Lower leg skin (tissue), 4 donors: ENCODE measurements at regions of chr16 and their contacts with region 1.

Region 1: DNA sequence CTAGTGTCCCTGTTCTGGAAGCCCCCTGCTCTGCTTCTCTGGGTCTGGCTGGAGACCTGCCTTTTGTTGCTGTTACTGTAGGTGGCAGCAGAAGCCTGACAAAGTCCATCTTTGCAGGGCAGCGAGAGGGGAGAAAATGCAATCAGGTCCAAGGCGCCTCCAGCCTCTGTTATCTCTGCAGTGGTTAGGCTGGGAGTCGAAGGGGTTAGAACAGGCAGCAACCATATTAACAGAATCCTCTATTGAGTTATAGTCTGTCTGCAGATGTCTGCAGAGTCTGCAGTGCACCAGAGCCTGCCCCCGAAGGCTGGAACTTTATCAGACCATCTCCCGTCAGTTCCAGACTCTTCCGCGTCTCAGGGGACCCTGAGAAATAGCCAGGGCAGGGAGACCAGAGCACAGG is 404.9 kb upstream of the EEF2KMT start:
- DNase-seq: no peak
- H3K4me3 ChIP-seq: no peak overlapping the region
- CTCF ChIP-seq: no peak
- POLR2A ChIP-seq: no peak

Region 2: GRCh38 chr16:4371357-4372000 is 1131.0 kb before region 1 on chr16 and contains the start of gene VASN:
- intact Hi-C with region 1: loop called (anchors 10 kb)
- DNase-seq: peak; percentile 67 to 96
- H3K4me3 ChIP-seq: peak within 1 kb of the TSS; percentile 35
- CTCF ChIP-seq: no peak
- POLR2A ChIP-seq: peak in 1 of 2 donors; percentile 96
- total RNA-seq, gene VASN: 35.6 to 52.8 (median 46.7) TPM

Region 3: DNA sequence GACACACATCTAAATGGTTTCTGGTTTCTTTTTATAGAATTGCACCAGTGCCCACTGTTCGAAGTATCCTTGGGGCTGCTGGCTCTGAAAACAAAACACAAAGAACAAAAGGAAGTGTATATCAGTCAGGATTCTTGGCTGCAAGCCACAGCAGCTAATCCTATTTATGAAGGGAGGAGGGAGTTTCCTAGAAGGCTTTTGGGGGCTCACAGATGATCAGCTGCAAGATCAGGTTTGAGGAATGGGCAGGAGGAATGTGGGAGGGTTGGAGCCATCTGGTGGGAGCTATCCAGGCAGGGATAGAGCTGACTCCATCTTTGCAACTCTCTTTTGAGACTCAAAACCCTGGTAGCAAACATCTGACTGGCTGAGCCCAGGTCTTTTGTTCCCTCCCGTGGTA is 286.6 kb before region 1 on chr16:
- intact Hi-C with region 1: no loop called
- DNase-seq: no peak
- H3K4me3 ChIP-seq: no peak overlapping the region
- CTCF ChIP-seq: no peak
- POLR2A ChIP-seq: no peak